Heart right ventricle (tissue), 16 donors: ENCODE measurements at regions of chr3 and their contacts with region 1.

Region 1: GRCh38 chr3:121552379-121552778 is 6.6 kb upstream of the POLQ start:
- DNase-seq: no peak
- ATAC-seq: no peak
- H3K4me3 ChIP-seq: peak overlapping the region in 3 of 10 donors; percentile 1 to 27 (median 11)
- H3K27ac ChIP-seq: no peak overlapping the region
- H3K4me1 ChIP-seq: peaks cover 0 to 7% (median 0%) of the 10 kb centered on the region in 9 donors
- H3K27me3 ChIP-seq: no peaks in the 10 kb centered on the region
- CTCF ChIP-seq: no peak

Region 2: DNA sequence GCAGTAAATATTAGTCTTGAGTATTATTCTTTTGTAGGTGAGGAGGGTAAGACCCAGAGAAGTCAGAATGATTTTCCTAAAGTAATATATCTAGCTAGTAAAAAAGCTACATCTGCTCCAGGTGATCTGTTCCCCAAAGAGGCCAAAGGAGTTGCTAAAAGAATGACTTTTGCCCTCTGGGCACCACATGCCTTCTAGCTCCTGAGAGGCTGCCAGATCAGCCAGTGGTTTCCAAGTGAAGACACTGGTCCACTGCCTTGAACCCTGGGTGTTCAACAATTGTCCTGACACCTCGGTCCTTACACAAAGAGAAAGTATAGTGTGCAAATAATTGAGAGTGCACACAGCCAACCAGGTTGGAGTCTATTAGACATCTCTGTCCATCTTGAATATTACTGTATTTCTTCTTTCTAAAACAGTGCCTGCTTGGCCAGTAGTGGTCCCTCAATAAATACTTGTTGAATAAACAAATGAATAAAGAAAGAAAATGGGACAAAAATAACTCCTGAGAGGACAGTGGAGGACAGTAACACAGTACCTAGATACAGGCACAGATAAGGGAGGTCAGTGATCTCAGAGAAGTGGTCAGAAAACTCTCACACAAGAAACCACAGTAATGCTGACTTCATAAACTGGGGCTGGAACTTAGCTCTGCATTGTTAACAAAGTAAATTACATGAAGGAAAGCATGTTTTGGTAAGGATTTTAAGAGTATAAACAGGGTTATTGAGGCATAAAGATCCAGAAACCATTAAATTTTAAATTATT is 716.1 kb after region 1 on chr3:
- intact Hi-C with region 1: loop called in 3 of 10 experiments (anchors 5 to 10 kb)
- DNase-seq: no peak
- ATAC-seq: no peak
- H3K4me3 ChIP-seq: no peak overlapping the region
- H3K27ac ChIP-seq: no peak overlapping the region
- H3K4me1 ChIP-seq: peaks cover 0 to 22% (median 0%) of the 10 kb centered on the region in 9 donors
- H3K27me3 ChIP-seq: peaks cover 0 to under 1% (median 0%) of the 10 kb centered on the region in 7 donors
- CTCF ChIP-seq: no peak